Mammary epithelial cell (primary cell): ENCODE measurements at regions of chr17 and their contacts with region 1.

Region 1: DNA sequence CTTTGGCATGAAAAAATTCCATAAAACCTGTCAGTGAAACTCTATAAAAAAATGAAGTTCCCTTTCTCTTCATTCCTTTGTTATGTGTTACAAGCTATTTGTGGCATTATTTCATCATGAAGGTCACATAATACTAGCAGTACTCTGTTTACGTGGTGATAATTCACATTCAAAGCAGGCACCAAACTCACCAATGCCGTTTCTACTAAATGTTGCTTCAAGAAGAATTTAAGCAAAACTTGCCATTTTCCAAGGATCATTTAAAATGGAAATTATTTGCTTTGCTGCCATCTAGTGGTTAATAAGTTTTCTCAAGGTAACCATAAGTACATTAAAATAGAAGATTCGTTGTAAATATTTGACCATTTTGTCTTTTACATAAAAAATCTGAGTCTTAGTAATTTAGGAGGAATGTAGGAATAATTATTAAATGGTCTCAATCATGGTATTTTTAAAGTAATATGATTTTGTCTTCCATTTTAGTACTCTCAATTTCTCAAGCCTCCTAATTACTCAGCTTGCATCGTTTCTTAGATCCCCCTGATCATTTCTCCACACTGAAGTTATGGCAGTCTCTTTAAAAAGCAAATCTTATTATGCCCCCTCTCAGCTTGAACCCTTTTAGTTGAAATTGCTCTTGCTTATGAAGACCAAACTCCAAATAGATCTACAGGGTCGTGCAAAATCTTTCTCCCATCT is 80.8 kb downstream of the OMG start:
- DNase-seq: peak; percentile 14
- H3K4me3 ChIP-seq: no peak overlapping the region
- H3K27ac ChIP-seq: no peak overlapping the region
- H3K4me1 ChIP-seq: no peaks in the 10 kb centered on the region
- H3K27me3 ChIP-seq: no peaks in the 10 kb centered on the region
- CTCF ChIP-seq: peak; percentile 38 to 43

Region 2: GRCh38 chr17:30831663-30832437 is 384.4 kb before region 1 on chr17 and contains the start of gene ATAD5:
- CTCF ChIA-PET with region 1: no interaction called
- dilution Hi-C with region 1: no loop called
- in situ Hi-C with region 1: no loop called
- intact Hi-C with region 1: loop called (anchors 10 kb)
- DNase-seq: peak; percentile 88
- H3K4me3 ChIP-seq: peak within 1 kb of the TSS; percentile 60 to 99 (median 84)
- H3K27ac ChIP-seq: peak within 1 kb of the TSS; percentile 68
- H3K4me1 ChIP-seq: peaks cover 12% of the 10 kb centered on the region
- H3K27me3 ChIP-seq: no peaks in the 10 kb centered on the region
- CTCF ChIP-seq: no peak
- total RNA-seq, gene ATAD5: 1.2 to 6.6 TPM

Region 3: DNA sequence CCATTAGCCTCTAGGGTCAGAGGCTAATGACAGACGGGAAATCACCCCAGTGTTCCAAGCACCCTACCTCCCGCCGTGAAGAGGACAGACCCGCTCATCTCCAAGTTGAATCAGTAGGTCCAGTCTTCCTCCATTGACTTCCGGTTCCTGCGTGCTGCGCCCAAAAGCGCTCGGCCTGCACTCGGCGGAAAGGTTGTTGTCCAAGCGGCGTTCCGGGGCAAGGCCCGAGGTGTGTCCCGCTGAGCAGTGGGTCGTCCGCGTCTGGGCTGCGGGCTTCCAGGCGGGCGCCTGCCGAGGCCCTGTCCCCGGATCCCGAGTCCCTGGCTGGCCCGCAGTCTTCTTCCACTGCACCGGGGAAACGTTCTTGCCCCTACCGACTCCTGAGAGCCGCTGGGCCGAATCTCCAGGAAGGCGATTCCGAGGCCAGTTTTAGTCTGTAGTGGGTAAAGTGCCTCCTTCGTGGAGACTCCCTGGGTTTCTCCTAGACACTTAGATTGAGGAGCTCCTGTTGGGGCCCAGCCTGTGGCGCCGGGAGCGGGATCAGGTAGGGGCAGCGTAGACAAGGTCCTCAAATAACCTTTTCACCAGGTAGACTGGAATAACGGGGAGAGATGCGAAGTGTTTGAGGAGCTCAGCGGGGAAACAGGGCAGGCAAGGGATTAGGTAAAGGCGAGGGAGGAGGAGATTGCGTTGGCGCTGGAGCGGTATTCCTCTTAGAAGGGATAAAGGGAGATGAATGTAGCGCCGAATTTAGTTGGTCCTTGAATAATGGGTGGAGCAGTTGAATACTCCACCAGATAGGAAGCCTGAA is 309.9 kb before region 1 on chr17 and contains the start of gene TEFM:
- CTCF ChIA-PET with region 1: no interaction called
- dilution Hi-C with region 1: no loop called
- in situ Hi-C with region 1: no loop called
- intact Hi-C with region 1: loop called (anchors 5 kb)
- DNase-seq: peak; percentile 91
- H3K4me3 ChIP-seq: peak within 1 kb of the TSS; percentile 60 to 98 (median 95)
- H3K27ac ChIP-seq: peak within 1 kb of the TSS; percentile 69
- H3K4me1 ChIP-seq: peaks cover 5% of the 10 kb centered on the region
- H3K27me3 ChIP-seq: no peaks in the 10 kb centered on the region
- CTCF ChIP-seq: no peak
- total RNA-seq, gene TEFM: 13.9 to 19.3 TPM

Region 4: DNA sequence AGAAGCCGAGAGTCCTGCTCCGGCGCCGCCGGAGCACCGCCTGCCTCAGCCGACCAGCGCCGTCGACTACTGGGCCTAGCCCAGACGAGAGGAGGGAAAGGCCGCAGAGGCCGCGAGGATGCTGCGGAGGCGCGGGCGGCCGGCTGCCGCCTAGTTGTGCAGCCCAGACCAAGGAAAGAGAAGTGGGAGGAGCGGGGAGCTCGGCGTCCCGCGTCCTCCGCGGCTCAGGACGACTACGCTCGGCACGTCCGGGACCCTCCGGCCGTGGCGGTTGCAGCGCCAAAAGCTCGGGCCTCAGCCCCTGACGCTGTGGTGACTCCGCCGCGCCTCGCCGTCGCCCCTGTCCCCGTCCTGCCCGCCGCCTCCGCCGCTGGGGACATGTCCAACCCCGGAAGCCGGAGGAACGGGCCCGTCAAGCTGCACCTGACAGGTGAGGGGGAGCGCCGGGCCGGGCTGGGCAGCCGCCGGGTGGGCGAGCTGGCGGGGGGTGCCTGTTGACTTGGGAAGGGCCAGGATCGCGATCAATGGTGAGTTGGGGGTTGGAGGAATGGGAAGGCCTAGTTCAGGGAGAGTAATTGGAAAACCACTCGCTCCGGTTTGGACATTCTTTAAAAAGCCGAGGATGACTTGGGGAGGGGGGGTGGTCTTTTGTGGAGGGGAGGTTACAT is 207.7 kb before region 1 on chr17:
- CTCF ChIA-PET with region 1: interaction called, 3 read pairs
- dilution Hi-C with region 1: no loop called
- in situ Hi-C with region 1: loop called (anchors 5 to 10 kb)
- intact Hi-C with region 1: loop called (anchors 1 kb)
- DNase-seq: peak; percentile 72
- H3K4me3 ChIP-seq: peak overlapping the region; percentile 59 to 67 (median 60)
- H3K27ac ChIP-seq: peak overlapping the region; percentile 27
- H3K4me1 ChIP-seq: peaks cover 8% of the 10 kb centered on the region
- H3K27me3 ChIP-seq: no peaks in the 10 kb centered on the region
- CTCF ChIP-seq: peak in 1 of 2 donors; percentile 10

Region 5: DNA sequence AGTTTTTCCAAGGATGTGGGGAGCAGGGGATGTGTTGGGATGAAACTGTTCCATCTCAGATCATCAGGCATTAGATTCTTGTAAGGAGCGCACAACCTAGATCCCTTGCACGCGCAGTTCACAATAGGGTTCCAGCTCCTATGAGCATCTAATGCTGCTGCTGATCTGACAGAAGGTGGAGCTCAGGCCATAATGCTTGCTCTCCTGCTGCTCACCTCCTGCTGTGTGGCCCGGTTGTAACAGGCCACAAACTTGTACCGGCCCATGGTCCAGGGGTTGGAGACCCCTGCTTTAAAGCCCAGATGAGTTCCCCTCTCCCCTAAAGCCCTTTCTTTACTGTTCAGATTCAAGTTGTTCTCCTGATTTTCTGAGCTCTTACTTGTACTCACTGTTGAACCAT is 200.6 kb before region 1 on chr17:
- CTCF ChIA-PET with region 1: interaction called, 3 read pairs
- dilution Hi-C with region 1: no loop called
- in situ Hi-C with region 1: loop called (anchors 5 to 10 kb)
- intact Hi-C with region 1: loop called (anchors 1 kb)
- DNase-seq: no peak
- H3K4me3 ChIP-seq: no peak overlapping the region
- H3K27ac ChIP-seq: no peak overlapping the region
- H3K4me1 ChIP-seq: no peaks in the 10 kb centered on the region
- H3K27me3 ChIP-seq: no peaks in the 10 kb centered on the region
- CTCF ChIP-seq: no peak

Region 6: DNA sequence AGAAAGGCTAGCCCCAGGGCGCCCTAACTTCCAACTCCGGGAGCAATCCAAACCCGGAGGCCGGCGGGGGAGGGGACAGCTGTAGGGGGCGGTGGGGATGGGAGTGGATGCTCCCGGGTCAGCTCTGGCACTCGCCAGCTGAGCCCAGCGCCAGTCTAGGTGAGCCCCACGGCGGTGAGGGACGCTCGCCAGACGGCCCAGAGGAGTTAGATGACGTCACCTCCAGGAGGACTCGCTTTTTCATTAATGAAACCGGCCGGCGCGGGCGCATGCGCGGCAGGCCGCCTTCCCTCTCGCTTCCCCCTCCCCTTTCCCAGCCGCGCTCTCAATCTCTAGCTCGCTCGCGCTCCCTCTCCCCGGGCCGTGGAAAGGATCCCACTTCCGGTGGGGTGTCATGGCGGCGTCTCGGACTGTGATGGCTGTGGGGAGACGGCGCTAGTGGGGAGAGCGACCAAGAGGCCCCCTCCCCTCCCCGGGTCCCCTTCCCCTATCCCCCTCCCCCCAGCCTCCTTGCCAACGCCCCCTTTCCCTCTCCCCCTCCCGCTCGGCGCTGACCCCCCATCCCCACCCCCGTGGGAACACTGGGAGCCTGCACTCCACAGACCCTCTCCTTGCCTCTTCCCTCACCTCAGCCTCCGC is 121.5 kb before region 1 on chr17 and contains the start of gene NF1:
- CTCF ChIA-PET with region 1: no interaction called
- dilution Hi-C with region 1: no loop called
- in situ Hi-C with region 1: no loop called
- intact Hi-C with region 1: loop called (anchors 5 kb)
- DNase-seq: peak; percentile 93
- H3K4me3 ChIP-seq: peak within 1 kb of the TSS; percentile 64 to 87 (median 68)
- H3K27ac ChIP-seq: peak within 1 kb of the TSS; percentile 59
- H3K4me1 ChIP-seq: peaks cover 7% of the 10 kb centered on the region
- H3K27me3 ChIP-seq: no peaks in the 10 kb centered on the region
- CTCF ChIP-seq: no peak
- total RNA-seq, gene NF1: 65.3 to 83.9 TPM

Region 7: DNA sequence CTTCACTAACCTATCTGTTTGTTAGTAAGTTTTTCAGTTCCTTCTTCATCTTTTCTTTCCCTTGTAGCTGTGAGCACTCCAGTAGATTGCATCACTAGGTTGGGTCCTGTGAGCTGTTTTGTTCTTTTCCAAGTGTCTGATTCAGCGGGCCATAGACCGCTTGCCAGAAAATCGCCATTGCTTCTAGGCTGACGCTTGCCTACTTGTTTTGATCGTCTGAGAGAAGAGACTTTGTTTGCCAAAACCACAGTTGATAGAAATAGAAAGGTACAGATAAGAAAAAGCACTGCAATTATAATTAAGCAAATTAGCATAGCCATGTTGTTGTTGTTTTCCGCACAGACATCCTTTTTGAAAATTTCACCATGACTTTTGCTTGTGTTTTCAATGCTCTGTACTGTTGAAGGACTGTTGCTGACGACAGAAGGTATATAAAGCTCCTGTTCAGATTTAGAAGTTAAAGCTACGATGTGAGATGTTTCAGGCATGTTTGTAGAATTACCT is 102.1 kb after region 1 on chr17:
- CTCF ChIA-PET with region 1: no interaction called
- dilution Hi-C with region 1: loop called (anchors 5 kb)
- in situ Hi-C with region 1: no loop called
- intact Hi-C with region 1: no loop called
- DNase-seq: peak; percentile 86
- H3K4me3 ChIP-seq: peak overlapping the region in 2 of 3 experiments; percentile 46 to 52
- H3K27ac ChIP-seq: peak overlapping the region; percentile 87
- H3K4me1 ChIP-seq: peaks cover 43% of the 10 kb centered on the region
- H3K27me3 ChIP-seq: no peaks in the 10 kb centered on the region
- CTCF ChIP-seq: no peak